ENCODE measurements at regions of chr5 and their contacts with region 1.

Region 1: GRCh38 chr5:133025804-133026663 is at the start of gene ZCCHC10:
- DNase-seq: peak; percentile 93 to 96 (median 95)
- ATAC-seq: peak; percentile 97 to 100 (median 100)
- H3K4me3 ChIP-seq: peak within 1 kb of the TSS; percentile 53 to 98 (median 83)
- H3K27ac ChIP-seq: peak within 1 kb of the TSS; percentile 75 to 97 (median 93)
- H3K4me1 ChIP-seq: peaks cover 0 to 24% (median 11%) of the 10 kb centered on the region in 12 donors
- H3K27me3 ChIP-seq: no peaks in the 10 kb centered on the region
- CTCF ChIP-seq: no peak
- POLR2A ChIP-seq: peak in 1 of 2 donors; percentile 75
- total RNA-seq, gene ZCCHC10: 9.9 to 22.5 (median 17.0) TPM

Region 2: DNA sequence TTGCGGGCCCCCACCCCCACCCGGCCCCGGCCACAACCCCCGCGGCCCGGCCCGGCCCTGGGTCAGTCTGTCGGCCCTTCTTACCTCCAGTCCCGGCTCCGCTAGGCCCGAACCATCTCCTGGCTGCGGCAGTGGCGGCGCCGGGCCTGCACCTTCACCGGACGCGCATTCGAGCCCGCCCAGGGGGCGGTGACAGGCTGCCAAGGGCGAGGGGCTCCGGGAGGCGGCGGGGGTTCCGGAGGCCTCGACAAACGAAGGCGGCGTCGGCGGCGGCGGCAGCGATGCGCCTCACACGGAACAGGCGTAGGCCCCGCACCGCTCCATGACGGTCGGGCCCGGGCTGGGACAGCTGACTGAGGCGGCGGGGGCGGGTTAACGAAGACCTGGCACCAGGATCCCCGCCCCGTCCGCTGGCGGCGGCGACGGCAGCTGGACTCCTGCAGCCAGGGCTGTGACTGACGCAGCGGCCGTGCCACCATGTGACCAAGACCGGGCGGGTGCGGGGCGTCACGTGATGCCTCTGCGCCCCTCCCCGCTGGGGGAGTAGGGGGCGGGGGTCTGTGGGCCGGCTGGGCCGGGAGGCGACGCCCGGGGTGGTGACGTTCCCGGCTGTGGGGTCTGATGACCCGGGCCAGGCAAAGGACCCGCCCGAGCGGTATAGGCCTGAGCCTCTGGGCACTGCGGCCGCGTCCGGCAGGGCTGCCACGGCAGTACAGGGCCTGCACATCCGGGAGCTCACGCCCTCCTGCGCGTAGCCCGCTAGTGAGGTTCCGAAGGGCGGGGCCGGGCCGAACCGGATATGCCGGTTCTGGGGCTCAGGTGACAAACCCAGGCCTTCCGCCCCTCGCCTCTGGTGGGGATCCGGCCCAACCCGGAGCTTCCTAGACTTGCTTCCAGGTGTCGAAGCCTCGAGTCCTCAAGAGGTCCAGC is 62.6 kb before region 1 on chr5 and contains the start of gene AFF4:
- intact Hi-C with region 1: loop called in 2 of 10 experiments (anchors 1 kb)
- DNase-seq: peak; percentile 97 to 99 (median 99)
- ATAC-seq: peak; percentile 93 to 98 (median 96)
- H3K4me3 ChIP-seq: peak within 1 kb of the TSS; percentile 70 to 98 (median 92)
- H3K27ac ChIP-seq: peak within 1 kb of the TSS; percentile 86 to 100 (median 98)
- H3K4me1 ChIP-seq: peaks cover 0 to 43% (median 25%) of the 10 kb centered on the region in 12 donors
- H3K27me3 ChIP-seq: no peaks in the 10 kb centered on the region
- CTCF ChIP-seq: peak in 1 of 12 donors; percentile 10
- POLR2A ChIP-seq: peak; percentile 59 to 97
- total RNA-seq, gene AFF4: 33.1 to 65.8 (median 53.4) TPM

Region 3: GRCh38 chr5:132979367-132979940 is 46.6 kb before region 1 on chr5:
- intact Hi-C with region 1: loop called in 1 of 10 experiments (anchors 10 kb)
- DNase-seq: no peak
- ATAC-seq: no peak
- H3K4me3 ChIP-seq: no peak overlapping the region
- H3K27ac ChIP-seq: no peak overlapping the region
- H3K4me1 ChIP-seq: no peaks in the 10 kb centered on the region
- H3K27me3 ChIP-seq: no peaks in the 10 kb centered on the region
- CTCF ChIP-seq: no peak
- POLR2A ChIP-seq: no peak

Region 4: DNA sequence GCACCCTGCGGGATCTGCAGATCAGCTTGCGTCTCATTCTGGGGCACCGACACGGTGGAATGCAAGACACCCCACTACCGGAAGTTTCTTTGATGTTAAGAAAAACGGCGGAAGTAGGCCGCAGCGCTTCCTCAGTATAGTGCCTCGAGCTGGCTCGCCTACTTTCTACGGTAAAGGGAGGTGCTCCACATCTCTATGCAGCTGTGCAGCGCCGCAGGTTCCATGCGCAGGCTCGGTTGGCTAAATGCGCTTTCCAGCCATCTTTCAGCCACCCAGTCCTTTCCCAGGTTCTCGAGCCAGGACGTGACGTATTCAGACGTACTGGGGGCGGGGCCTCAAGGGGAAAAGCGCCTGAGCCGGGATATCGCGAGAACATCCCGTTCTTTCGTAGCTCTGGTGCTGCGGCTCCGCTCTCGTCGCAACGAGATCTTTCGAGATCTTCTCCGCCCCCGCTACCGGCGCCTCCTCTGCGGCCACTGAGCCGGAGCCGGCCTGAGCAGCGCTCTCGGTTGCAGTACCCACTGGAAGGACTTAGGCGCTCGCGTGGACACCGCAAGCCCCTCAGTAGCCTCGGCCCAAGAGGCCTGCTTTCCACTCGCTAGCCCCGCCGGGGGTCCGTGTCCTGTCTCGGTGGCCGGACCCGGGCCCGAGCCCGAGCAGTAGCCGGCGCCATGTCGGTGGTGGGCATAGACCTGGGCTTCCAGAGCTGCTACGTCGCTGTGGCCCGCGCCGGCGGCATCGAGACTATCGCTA is 25.7 kb after region 1 on chr5 and contains the start of gene HSPA4:
- intact Hi-C with region 1: loop called in 2 of 10 experiments (anchors 2 kb)
- DNase-seq: peak; percentile 97 to 98 (median 98)
- ATAC-seq: peak; percentile 87 to 95 (median 92)
- H3K4me3 ChIP-seq: peak within 1 kb of the TSS; percentile 54 to 99 (median 80)
- H3K27ac ChIP-seq: peak within 1 kb of the TSS; percentile 87 to 99 (median 97)
- H3K4me1 ChIP-seq: peaks cover 5 to 51% (median 40%) of the 10 kb centered on the region in 12 donors
- H3K27me3 ChIP-seq: no peaks in the 10 kb centered on the region
- CTCF ChIP-seq: no peak
- POLR2A ChIP-seq: peak; percentile 82 to 96
- total RNA-seq, gene HSPA4: 57.5 to 132 (median 98.5) TPM

Region 5: DNA sequence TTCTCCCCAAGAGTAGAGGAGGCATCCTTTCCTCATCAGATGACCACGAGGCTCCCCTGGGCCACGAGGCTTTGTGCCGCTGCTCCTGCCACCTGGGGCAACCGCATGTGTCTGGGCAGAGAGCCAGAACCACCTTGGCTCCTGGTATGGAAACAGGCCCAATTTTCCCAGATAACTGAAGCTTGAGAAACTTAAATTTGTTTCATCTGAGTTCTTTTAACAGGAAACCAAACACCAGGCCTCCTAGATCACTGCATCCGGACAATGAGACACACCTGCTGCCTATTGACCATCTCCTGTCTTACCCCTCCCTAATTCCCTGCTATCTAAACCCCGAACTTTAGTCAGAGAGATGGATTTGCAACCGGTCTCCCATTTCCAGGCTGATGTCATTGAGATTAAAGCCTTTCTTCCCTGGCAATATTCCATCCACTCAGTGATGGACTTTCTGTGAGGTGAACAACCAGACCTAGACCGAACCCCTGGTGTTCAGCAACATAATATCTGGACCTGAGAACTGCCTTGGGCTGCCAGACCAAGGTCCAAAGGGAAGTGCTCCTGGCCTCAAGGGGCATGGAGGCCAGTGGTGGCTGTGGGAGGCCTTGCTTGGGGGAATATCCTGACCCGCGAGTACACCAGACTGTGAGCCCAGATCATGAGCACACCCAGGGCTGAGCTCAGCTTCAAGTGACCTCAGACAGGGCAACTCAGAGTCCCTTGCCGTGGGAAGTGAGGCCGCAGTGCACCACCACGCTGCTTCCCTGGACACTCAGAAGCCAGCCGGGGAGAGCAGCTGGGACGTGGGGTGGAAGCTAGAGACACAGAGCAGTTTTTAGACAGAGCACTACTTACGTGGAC is 225.5 kb after region 1 on chr5:
- intact Hi-C with region 1: no loop called
- DNase-seq: no peak
- ATAC-seq: no peak
- H3K4me3 ChIP-seq: no peak overlapping the region
- H3K27ac ChIP-seq: no peak overlapping the region
- H3K4me1 ChIP-seq: no peaks in the 10 kb centered on the region
- H3K27me3 ChIP-seq: no peaks in the 10 kb centered on the region
- CTCF ChIP-seq: no peak
- POLR2A ChIP-seq: no peak

Measured in heart left ventricle (tissue), 16 donors.